PC-3 (cell line): ENCODE measurements at regions of chr5 and their contacts with region 1.

Region 1: DNA sequence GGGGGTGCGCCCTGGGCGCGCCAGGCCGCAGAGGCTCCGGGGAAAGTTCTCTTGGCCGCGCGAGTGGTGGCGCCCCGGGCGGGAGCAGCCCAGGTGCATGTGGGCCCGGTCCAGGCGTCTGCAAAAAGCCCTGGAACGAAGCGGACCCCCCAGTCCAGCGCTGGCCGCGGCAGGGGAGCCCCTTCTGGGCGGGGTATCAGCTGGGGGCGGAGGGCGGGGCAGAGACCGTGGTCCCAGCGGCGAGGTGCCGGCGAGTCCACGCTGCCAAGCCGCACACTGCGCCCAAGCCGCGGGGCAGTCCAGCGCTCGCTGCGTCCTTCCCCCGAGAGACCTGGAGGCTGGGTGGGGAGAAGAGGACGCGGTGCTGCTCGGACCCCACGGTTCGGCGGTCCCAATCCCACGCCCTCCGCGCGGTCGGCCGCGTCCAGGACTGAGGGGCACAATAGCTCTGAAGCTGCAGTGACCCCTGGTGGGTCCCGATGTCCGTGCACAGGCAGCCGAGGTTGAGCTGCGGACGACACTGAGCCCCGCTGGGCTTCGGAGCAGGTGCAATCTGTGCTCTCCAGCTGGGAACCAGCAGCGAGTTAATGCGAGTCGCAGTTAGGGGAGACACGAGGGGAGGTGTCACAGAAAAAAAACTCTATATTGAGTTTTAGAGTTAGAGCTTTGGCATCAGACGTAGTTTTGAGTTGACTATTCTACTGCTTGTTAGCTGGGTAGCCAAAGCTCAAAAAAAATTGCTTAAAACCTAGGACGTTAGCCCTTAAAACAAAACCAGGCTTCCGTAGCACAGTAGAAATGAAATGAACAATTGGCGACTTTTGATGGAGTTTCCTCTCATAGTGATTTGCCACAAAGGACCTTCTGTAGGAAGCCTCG is 1.1 kb upstream of the EPB41L4A start:
- DNase-seq: peak; percentile 59
- ATAC-seq: peak; percentile 88
- H3K4me3 ChIP-seq: peak overlapping the region; percentile 60
- H3K27ac ChIP-seq: no peak overlapping the region
- H3K4me1 ChIP-seq: peaks cover 13% of the 10 kb centered on the region; the same call in 1 of the 2 replicates
- H3K27me3 ChIP-seq: peaks cover 83% of the 10 kb centered on the region
- CTCF ChIP-seq: peak; percentile 70

Region 2: DNA sequence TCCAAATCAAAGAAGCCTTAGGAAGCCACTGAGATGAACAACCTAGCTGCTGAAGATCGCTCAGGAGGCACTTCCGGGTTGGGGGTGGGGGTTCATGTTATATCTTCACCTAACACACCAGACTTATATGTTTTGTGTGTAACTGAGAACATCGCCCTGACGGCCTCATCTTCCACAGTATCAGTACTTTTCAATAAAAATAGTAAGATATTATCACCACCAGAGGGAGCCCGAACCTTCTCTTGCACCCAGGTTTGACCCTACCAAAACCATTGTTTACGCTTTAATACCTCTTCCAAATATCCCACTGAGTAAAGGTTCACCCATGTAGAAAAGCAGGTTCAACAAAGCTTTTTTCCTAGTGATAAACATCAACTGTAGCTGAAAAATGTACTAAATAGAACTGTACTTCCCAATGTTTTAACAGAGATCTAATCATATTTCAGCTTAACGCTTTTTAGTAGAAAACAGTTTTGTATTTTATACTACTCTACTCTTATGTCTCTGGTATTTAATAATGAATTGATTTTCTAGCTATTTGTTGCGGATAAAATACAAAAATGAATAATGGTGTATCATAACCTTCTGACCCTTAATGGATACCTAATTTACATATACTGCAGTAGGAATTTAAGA is 245.1 kb before region 1 on chr5:
- CTCF ChIA-PET with region 1: interaction called, 6 read pairs
- POLR2A ChIA-PET with region 1: no interaction called
- intact Hi-C with region 1: loop called (anchors 10 kb)
- DNase-seq: peak; percentile 67
- ATAC-seq: peak; percentile 80
- H3K4me3 ChIP-seq: peak overlapping the region; percentile 32; the same call in 1 of the 2 replicates
- H3K27ac ChIP-seq: no peak overlapping the region
- H3K4me1 ChIP-seq: peaks cover 7% of the 10 kb centered on the region
- H3K27me3 ChIP-seq: 0 out of 2 replicates have a peak, but pooled peaks cover 7% of the 10 kb centered on the region
- CTCF ChIP-seq: peak; percentile 83

Region 3: DNA sequence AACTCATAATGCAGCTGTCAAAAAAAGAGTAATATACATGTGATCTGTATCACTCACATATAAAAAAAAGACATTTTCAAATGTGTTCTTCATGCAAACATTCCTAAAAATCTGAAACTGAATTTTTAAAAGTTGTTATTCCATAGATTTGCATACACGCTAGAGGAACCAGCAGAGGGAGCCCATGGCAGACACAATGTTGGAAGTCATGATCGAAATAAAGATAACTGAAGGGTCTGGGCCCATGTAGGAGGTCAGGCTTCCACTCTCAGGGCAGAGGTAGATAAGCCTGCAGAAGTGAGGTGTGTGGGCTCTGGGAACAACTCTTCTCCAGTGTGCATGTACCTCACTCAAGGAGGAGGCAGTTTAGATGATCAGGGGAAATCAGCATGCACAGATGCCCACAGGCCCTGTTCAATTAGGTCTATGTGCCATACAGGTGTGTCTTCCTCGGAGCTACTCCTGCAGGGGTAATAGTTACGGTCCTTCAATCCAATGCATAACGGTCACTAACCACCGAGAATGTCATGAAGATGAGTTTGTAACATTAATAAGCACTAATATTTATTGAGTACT is 209.7 kb before region 1 on chr5:
- CTCF ChIA-PET with region 1: no interaction called
- POLR2A ChIA-PET with region 1: no interaction called
- intact Hi-C with region 1: loop called (anchors 1 kb)
- DNase-seq: peak; percentile 54
- ATAC-seq: peak; percentile 56
- H3K4me3 ChIP-seq: no peak overlapping the region
- H3K27ac ChIP-seq: no peak overlapping the region
- H3K4me1 ChIP-seq: no peaks in the 10 kb centered on the region
- H3K27me3 ChIP-seq: peaks cover 30% of the 10 kb centered on the region
- CTCF ChIP-seq: peak; percentile 86

Region 4: GRCh38 chr5:112366987-112367386 is 53.2 kb before region 1 on chr5:
- CTCF ChIA-PET with region 1: no interaction called
- POLR2A ChIA-PET with region 1: no interaction called
- intact Hi-C with region 1: no loop called
- DNase-seq: peak; percentile 39
- ATAC-seq: peak; percentile 70
- H3K4me3 ChIP-seq: no peak overlapping the region
- H3K27ac ChIP-seq: no peak overlapping the region
- H3K4me1 ChIP-seq: no peaks in the 10 kb centered on the region
- H3K27me3 ChIP-seq: peaks cover 28% of the 10 kb centered on the region
- CTCF ChIP-seq: peak; percentile 52